ENCODE measurements at regions of chr15 and their contacts with region 1.

Region 1: GRCh38 chr15:90789462-90789861 is 72.3 kb downstream of the BLM start:
- DNase-seq: no peak
- ATAC-seq: no peak
- H3K4me3 Mint-ChIP-seq: no peak overlapping the region
- H3K27ac Mint-ChIP-seq: no peak overlapping the region
- H3K4me1 Mint-ChIP-seq: peaks cover 18% of the 10 kb centered on the region
- H3K27me3 Mint-ChIP-seq: no peaks in the 10 kb centered on the region
- CTCF ChIP-seq: no peak

Region 2: DNA sequence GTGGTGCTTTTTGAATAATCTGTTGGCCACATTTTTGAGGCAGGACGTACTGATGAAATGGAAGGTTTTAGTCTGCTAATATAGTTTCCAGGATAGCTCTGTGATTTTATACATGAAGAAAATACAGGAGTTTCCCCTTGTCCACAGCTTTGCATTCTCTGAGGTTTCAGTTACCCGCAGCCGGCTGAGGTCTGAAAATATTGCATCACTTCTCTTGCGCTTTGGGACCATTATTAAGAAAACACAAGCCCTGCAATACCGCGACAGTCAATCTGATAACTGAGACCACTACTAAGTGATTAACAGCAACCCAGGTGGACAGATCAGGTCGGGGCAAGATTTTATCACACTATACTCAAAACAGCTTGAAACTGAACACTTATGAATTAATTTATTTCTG is 39.3 kb before region 1 on chr15:
- CTCF ChIA-PET with region 1: no interaction called
- POLR2A ChIA-PET with region 1: no interaction called
- intact Hi-C with region 1: loop called (anchors 5 kb)
- DNase-seq: no peak
- ATAC-seq: peak; percentile 67
- H3K4me3 Mint-ChIP-seq: peak overlapping the region; percentile 67
- H3K27ac Mint-ChIP-seq: peak overlapping the region; percentile 84
- H3K4me1 Mint-ChIP-seq: peaks cover 21% of the 10 kb centered on the region
- H3K27me3 Mint-ChIP-seq: no peaks in the 10 kb centered on the region
- CTCF ChIP-seq: no peak

Region 3: DNA sequence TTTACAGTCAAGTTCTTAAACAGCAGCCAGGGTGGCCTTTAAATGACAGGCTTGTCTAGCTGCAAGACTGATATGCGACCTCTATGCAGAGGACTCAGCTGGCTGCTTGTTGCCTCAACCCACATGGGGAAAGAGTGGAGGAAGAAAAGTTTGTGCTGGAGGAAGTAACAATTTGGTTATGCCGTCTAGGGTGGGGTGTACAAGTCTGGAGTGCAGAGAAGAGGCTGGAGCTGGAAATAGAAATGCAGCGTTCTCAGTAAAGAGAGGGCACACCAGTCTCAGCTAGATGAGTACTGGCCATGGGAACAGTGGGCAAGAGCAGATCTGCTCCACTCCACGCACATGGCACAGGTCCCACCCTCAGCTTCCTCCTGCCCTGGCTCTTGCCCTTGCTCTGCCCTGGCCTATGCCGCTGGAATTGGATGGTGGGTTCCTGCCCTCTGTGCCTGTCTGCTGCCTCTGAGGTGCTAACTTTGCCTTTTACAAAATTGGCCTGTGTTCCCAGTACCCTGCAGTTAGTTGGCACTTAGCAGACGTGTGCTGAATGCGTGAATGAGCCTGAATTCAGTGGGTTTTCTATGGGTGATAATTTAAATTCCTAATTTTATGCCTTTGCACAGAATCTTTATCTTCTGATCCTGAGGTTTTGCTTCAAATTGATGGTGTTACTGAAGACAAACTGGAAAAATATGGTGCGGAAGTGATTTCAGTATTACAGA is 19.2 kb after region 1 on chr15:
- CTCF ChIA-PET with region 1: interaction called, 3 read pairs
- POLR2A ChIA-PET with region 1: interaction called, 10 read pairs
- intact Hi-C with region 1: no loop called
- DNase-seq: no peak
- ATAC-seq: peak; percentile 81
- H3K4me3 Mint-ChIP-seq: peak overlapping the region; percentile 79
- H3K27ac Mint-ChIP-seq: peak overlapping the region; percentile 57
- H3K4me1 Mint-ChIP-seq: peaks cover 50% of the 10 kb centered on the region
- H3K27me3 Mint-ChIP-seq: no peaks in the 10 kb centered on the region
- CTCF ChIP-seq: no peak

Region 4: DNA sequence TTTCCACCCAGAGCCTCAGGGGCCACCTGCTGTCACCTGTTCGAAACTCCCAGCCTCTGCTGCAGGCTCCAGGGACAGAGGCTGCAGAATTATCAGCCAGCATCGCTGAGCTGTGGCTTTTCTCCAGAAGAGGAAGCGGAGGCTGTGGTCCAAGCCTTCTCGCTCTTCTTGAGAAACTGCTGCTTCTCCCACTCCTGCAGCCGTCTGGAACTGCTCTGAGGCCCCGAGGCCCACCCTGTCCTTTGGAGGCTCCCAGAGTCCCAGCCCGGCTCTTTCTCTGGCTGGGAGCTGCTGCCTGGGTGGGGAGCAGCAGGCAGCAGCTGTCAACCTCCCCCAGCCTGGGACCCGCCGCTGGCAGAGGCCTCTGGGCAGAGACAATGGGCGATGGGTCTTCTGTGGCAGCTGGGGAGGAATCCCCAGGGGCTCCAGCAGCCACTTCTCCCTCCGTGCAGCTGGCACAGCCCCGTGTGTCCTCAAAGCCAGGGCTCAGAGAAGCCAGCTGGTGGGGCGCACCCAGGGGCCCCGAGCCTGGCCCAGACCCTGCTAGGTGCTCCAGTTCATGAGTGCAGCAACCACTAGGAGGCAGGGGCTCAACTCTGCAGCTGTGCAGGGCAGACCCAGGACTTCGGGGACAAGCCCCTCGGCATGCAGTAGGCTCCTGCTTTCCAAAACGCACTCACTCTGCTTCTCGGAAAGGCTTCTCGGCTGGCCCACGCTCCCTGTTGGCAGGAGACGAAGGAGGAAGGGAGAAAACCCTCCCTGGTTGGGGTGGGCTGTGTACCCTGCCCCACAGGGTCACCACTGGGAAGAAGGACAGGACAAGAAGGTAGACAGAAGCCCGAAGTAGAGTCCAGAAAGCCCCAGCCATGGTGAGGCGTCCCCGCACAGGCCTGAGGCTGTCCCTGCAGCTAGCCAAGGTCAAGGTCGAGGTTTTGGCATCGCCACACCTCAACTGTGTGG is 29.1 kb after region 1 on chr15:
- CTCF ChIA-PET with region 1: no interaction called
- POLR2A ChIA-PET with region 1: interaction called, 10 read pairs
- intact Hi-C with region 1: no loop called
- DNase-seq: peak; percentile 60
- ATAC-seq: peak; percentile 95
- H3K4me3 Mint-ChIP-seq: peak overlapping the region; percentile 41
- H3K27ac Mint-ChIP-seq: peak overlapping the region; percentile 66
- H3K4me1 Mint-ChIP-seq: peaks cover 46% of the 10 kb centered on the region
- H3K27me3 Mint-ChIP-seq: no peaks in the 10 kb centered on the region
- CTCF ChIP-seq: no peak

Region 5: GRCh38 chr15:90915808-90916440 is 126.5 kb after region 1 on chr15:
- CTCF ChIA-PET with region 1: no interaction called
- POLR2A ChIA-PET with region 1: no interaction called
- intact Hi-C with region 1: no loop called
- DNase-seq: no peak
- ATAC-seq: peak; percentile 31
- H3K4me3 Mint-ChIP-seq: no peak overlapping the region
- H3K27ac Mint-ChIP-seq: peak overlapping the region; percentile 21
- H3K4me1 Mint-ChIP-seq: peaks cover 10% of the 10 kb centered on the region
- H3K27me3 Mint-ChIP-seq: no peaks in the 10 kb centered on the region
- CTCF ChIP-seq: no peak

Measured in activated B cell treated with CpG ODN at 0.5 μM for 24 hours (primary cell).